Head of caudate nucleus (tissue), 42 donors: ENCODE measurements at regions of chr2 and their contacts with region 1.

Region 1: DNA sequence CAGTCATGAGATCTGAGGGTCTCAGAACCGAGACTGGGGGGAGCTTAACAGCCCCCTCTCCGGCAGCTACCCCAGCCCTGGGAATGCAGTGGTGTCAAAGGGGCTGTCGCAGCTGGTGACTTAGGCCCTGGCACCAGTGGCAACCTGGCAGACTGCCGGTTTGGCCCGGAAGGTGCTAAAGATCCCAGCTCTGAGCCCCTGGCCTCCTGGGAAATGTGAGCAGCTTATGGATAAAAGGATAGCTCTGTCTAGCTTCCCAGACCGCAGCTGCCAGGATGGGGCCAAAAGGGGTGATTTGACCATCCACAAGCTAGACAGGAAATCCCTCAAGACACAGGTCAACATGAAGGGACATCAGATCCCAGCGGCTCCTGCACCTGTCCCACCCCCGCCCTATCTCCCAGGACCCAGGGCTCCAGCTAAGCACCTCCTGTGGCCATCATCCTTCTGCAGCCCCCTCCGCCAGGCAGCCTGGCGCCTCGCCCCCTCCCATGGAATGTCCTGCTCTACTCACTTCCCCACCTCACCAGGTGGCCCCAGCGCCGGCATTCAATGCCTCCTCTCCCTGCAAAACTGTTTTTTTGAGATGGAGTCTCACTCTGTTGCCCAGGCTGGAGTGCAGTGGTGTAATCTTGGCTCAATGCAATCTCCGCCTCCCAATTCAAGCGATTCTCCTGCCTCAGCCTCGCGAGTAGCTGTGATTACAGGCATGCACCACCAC is 33.2 kb upstream of the EFHD1 start:
- DNase-seq: no peak

Region 2: GRCh38 chr2:232668805-232669444 is 68.7 kb after region 1 on chr2:
- intact Hi-C with region 1: loop called (anchors 10 kb)
- DNase-seq: peak in 33 of 42 donors; percentile 14 to 80 (median 47)

Region 3: GRCh38 chr2:233021771-233022170 is 421.6 kb after region 1 on chr2:
- intact Hi-C with region 1: no loop called
- DNase-seq: no peak